Caco-2 (cell line): ENCODE measurements at regions of chr15 and their contacts with region 1.

Region 1: DNA sequence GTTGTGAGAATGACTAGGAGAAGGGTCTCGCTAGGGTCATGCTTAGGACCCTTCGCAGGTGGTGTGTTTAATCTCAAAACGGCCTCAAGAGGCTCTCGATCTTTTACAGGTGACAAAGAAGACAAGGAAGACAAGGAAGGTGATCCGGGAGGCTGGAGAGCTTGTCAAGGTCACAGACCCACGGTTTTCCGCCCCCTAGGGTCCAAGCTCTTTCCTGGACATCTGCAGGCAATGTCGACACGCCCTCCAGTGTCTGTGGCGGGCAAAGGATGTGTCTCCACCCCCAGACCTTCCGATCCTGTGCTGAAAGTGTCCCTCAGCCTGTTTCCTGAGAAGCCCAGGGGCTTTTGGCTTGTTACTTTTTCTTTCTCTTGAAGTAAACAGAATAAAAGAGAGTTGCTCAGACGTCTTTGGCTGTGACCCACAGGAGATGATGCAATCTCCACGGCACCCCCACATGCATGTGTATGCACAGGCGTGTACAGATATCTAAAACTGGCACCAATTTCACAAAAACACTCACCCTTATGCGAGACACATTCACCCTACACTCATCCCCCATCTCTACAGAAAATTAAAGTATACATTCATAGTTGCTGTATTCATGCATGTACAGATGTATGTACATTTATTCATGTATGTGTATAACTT is 108.8 kb downstream of the KLF13 start:
- DNase-seq: peak; percentile 83 to 85
- H3K4me3 ChIP-seq: no peak overlapping the region
- H3K4me3 Mint-ChIP-seq: peak overlapping the region; percentile 32
- H3K27ac Mint-ChIP-seq: no peak overlapping the region
- H3K4me1 ChIP-seq: no peaks in the 10 kb centered on the region
- H3K4me1 Mint-ChIP-seq: peaks cover 12% of the 10 kb centered on the region
- H3K27me3 ChIP-seq: no peaks in the 10 kb centered on the region
- H3K27me3 Mint-ChIP-seq: no peaks in the 10 kb centered on the region
- CTCF ChIP-seq: peak; percentile 70 to 98

Region 2: DNA sequence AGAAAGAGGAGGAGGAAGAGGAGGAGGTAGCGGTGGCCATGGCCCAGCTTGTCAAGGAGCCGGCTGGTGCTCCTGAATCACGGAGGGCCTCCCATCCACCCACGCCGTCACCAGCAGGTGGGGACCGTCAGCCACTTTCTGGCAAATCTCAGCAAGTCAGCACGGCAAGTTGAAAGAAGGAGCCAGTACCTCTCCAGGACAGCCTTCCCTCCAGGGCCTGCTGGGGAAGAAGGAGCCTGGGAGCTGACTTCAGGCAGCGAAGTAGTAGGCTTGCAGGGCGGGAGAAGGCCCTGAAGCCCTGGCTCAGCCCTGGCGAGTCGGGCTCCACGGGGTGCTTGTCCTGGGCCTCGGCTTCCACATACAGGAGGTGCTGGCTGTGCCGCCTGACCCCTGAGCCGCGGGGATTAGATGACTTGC is 234.6 kb before region 1 on chr15:
- CTCF ChIA-PET with region 1: interaction called, 11 read pairs
- POLR2A ChIA-PET with region 1: no interaction called
- intact Hi-C with region 1: loop called (anchors 2 kb)
- DNase-seq: peak; percentile 74 to 77
- H3K4me3 ChIP-seq: no peak overlapping the region
- H3K4me3 Mint-ChIP-seq: no peak overlapping the region
- H3K27ac Mint-ChIP-seq: no peak overlapping the region
- H3K4me1 ChIP-seq: no peaks in the 10 kb centered on the region
- H3K4me1 Mint-ChIP-seq: no peaks in the 10 kb centered on the region
- H3K27me3 ChIP-seq: no peaks in the 10 kb centered on the region
- H3K27me3 Mint-ChIP-seq: peaks cover 11% of the 10 kb centered on the region
- CTCF ChIP-seq: peak; percentile 47 to 73

Region 3: DNA sequence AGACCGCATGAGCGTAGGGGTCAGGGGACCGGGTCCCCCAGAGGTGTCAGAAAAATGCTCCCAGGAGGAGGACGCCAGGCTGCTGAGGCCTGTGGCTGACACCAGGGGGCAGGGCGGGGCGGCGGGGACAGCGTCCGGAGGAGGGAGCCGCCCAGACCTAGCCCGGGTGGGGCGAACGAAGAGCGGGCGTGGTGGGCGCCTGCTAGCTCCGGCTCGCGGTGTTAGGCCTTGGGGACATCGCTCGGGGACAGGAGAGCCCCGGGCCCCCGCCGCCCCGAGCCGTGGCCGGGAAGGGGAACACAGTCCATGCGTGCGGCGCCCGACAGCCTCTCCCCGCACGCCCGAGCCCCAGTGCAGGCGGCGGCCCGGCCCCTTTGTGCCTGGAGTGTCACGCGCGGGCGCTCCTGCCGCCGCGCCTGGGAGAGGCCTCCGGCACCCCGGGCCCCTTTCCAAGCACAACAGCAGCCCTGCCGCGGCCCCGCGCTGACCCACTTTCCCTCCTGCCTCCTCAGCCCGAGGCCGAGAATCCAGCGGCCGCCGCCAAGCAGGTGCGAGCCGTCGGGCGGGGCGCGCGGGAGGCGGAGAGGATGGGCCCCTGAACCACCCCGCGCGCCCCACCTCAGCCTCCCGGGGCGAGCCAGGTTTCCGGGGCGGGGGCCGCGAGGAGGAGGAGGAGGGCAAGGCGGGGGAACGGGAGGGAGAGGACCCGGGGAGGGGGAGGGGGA is 219.7 kb before region 1 on chr15:
- CTCF ChIA-PET with region 1: interaction called, 15 read pairs
- POLR2A ChIA-PET with region 1: no interaction called
- intact Hi-C with region 1: loop called (anchors 1 kb)
- DNase-seq: peak; percentile 72 to 84
- H3K4me3 ChIP-seq: peak overlapping the region; percentile 57
- H3K4me3 Mint-ChIP-seq: peak overlapping the region; percentile 67
- H3K27ac Mint-ChIP-seq: no peak overlapping the region
- H3K4me1 ChIP-seq: peaks cover 8% of the 10 kb centered on the region; the same call in 1 of the 2 replicates
- H3K4me1 Mint-ChIP-seq: no peaks in the 10 kb centered on the region
- H3K27me3 ChIP-seq: no peaks in the 10 kb centered on the region
- H3K27me3 Mint-ChIP-seq: no peaks in the 10 kb centered on the region
- CTCF ChIP-seq: peak; percentile 93 to 94

Region 4: DNA sequence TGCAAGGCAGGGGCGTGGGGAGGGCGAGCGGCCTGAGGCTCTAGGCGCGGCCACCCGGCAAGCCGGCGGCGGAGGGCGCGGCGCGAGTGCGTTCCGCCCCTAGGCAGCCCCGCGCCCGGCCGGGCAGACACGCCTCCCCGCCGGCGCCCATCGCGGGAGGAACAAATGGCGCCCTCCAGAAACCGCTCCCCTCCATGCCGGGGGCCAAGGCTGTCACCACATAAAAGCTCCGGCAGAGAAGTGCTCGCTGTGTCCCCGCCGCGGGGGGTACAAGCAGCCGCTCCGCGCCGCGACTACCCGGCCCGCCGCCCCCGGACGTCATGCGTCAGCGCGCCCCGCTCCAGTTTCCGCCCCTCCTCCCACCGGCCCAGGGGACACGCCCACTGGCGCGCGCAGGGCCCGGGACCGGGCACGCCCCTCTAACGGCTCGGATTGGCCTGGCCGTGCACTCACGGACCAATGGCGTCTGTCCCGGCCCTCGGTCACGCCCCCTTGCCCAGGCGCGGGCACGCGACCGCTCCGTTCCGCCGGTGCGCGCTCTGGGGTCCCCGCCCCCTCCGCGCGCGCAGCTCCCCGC is 109.1 kb before region 1 on chr15:
- CTCF ChIA-PET with region 1: interaction called, 12 read pairs
- POLR2A ChIA-PET with region 1: no interaction called
- intact Hi-C with region 1: loop called (anchors 2 kb)
- DNase-seq: peak; percentile 97 to 99
- H3K4me3 ChIP-seq: peak overlapping the region; percentile 92
- H3K4me3 Mint-ChIP-seq: peak overlapping the region; percentile 86
- H3K27ac Mint-ChIP-seq: peak overlapping the region; percentile 76
- H3K4me1 ChIP-seq: peaks cover 11% of the 10 kb centered on the region
- H3K4me1 Mint-ChIP-seq: no peaks in the 10 kb centered on the region
- H3K27me3 ChIP-seq: no peaks in the 10 kb centered on the region
- H3K27me3 Mint-ChIP-seq: no peaks in the 10 kb centered on the region
- CTCF ChIP-seq: no peak

Region 5: DNA sequence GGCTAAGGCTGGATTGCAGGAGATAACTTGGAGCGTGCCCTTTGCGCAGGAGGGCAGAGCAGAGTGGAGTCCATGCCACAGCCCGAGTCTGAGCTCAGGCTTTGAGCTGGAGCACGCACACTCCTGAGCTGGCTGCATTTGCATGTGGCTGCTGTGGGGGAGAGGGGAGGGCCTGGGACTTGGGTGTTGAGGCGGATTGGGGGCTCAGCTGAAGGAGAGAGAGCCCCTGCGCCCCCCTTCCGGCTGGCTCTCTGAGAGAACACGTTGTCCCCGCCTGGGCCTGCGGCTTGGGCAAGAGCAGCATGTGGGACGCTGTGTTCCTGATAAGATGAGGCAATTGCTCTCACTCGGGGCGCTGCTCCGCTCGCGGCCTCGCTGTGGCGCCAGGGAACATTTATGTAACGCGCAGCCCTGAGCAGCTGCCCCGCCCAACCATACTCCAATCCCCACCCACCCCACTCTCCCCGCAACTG is 69.7 kb before region 1 on chr15:
- CTCF ChIA-PET with region 1: interaction called, 20 read pairs
- POLR2A ChIA-PET with region 1: no interaction called
- intact Hi-C with region 1: loop called (anchors 5 kb)
- DNase-seq: no peak
- H3K4me3 ChIP-seq: no peak overlapping the region
- H3K4me3 Mint-ChIP-seq: no peak overlapping the region
- H3K27ac Mint-ChIP-seq: no peak overlapping the region
- H3K4me1 ChIP-seq: 0 out of 2 replicates have a peak, but pooled peaks cover 10% of the 10 kb centered on the region
- H3K4me1 Mint-ChIP-seq: no peaks in the 10 kb centered on the region
- H3K27me3 ChIP-seq: no peaks in the 10 kb centered on the region
- H3K27me3 Mint-ChIP-seq: no peaks in the 10 kb centered on the region
- CTCF ChIP-seq: no peak

Region 6: DNA sequence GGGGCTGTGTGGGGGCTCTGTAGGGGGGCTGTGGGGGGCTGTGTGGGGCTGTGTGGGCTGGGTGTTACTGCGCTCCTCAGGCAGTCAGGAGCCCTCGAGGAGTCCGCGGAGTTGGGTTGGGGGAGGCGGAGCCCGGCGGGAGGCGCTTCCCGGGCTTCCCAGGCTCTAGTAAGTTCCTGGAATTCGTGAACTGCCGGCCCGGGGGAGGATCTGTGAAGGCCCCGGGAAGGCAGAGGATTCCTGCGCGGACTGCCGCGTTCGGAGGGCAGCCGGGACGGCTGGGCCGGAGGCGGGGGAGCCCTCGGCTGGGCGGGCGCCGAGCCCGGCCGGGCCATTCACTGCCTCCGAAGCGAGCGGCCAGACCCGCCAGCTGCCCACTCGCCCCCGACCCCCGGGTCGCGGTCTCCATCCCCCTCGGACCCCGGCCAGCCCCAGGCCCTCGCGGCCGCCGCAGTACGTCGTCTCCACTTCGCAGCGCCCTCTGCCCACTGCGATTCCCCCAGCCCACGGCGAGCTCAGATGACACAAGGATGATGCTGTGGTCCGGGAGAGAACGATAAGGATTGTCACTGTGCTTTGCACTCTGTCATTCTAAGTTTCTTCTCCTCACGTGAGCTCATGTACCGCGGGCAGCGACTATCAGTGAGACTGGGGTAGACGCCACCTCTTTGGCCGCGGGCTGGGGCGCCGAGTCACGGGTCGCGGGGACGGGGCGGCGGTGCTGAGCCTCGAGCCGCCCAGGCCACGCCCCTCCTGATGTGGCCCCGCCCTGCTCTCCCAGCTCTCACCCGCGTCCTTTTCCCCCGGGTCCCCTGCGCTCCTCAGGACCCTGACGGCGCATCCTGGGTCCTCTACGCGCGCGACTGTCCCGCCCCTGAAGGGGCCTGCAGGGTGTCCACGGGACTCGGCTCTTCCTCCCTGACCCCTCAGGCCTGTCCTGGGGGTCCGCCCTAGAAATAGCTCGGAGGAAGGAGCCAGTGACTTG is 43.4 kb before region 1 on chr15:
- CTCF ChIA-PET with region 1: interaction called, 11 read pairs
- POLR2A ChIA-PET with region 1: no interaction called
- intact Hi-C with region 1: loop called (anchors 2 kb)
- DNase-seq: peak; percentile 70 to 78
- H3K4me3 ChIP-seq: peak overlapping the region; percentile 69
- H3K4me3 Mint-ChIP-seq: peak overlapping the region; percentile 86
- H3K27ac Mint-ChIP-seq: peak overlapping the region; percentile 20
- H3K4me1 ChIP-seq: peaks cover 8% of the 10 kb centered on the region
- H3K4me1 Mint-ChIP-seq: peaks cover 19% of the 10 kb centered on the region
- H3K27me3 ChIP-seq: no peaks in the 10 kb centered on the region
- H3K27me3 Mint-ChIP-seq: no peaks in the 10 kb centered on the region
- CTCF ChIP-seq: no peak